ENCODE measurements at regions of chr7 and their contacts with region 1.

Region 1: GRCh38 chr7:5177060-5177459 is 13.0 kb upstream of the WIPI2 start:
- DNase-seq: no peak
- ATAC-seq: no peak
- H3K4me3 Mint-ChIP-seq: no peak overlapping the region
- H3K27ac Mint-ChIP-seq: no peak overlapping the region
- H3K4me1 Mint-ChIP-seq: no peaks in the 10 kb centered on the region
- H3K27me3 Mint-ChIP-seq: peaks cover 5% of the 10 kb centered on the region
- CTCF ChIP-seq: no peak

Region 2: DNA sequence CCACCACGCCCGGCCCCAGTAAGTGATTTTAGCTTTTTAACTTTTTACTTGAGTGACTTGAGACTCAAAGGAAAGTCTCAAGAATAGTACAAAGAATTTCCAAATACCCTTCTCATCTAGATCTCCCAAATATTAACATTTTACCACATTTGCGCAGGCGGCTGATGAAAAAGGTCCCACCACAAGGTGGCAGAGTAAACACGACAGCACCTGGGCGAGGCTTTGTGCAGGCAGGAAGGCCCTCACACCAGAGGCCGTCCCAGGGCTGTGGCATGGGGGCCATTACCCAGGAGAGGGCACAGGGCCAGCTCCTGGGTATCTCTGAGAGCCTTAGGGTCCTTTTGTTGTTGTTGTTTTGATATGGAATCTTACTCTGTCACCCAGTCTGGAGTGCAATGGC is 37.1 kb before region 1 on chr7:
- CTCF ChIA-PET with region 1: no interaction called
- POLR2A ChIA-PET with region 1: no interaction called
- intact Hi-C with region 1: loop called (anchors 1 kb)
- DNase-seq: no peak
- ATAC-seq: no peak
- H3K4me3 Mint-ChIP-seq: no peak overlapping the region
- H3K27ac Mint-ChIP-seq: no peak overlapping the region
- H3K4me1 Mint-ChIP-seq: peaks cover 12% of the 10 kb centered on the region
- H3K27me3 Mint-ChIP-seq: peaks cover 2% of the 10 kb centered on the region
- CTCF ChIP-seq: no peak

Measured in activated B cell treated with CpG ODN at 0.5 μM for 24 hours (primary cell).